AG04450 (cell line): ENCODE measurements at regions of chr9 and their contacts with region 1.

Region 1: GRCh38 chr9:127785023-127785932 is 556 bp upstream of the CDK9 start:
- DNase-seq: no peak
- H3K4me3 ChIP-seq: peak overlapping the region; percentile 68
- H3K27ac ChIP-seq: no peak overlapping the region
- H3K27me3 ChIP-seq: peaks cover 3% of the 10 kb centered on the region
- CTCF ChIP-seq: peak; percentile 72

Region 2: GRCh38 chr9:127694890-127695720 is 90.2 kb before region 1 on chr9:
- CTCF ChIA-PET with region 1: no interaction called
- POLR2A ChIA-PET with region 1: no interaction called
- DNase-seq: no peak
- H3K4me3 ChIP-seq: no peak overlapping the region
- H3K27ac ChIP-seq: no peak overlapping the region
- H3K27me3 ChIP-seq: no peaks in the 10 kb centered on the region
- CTCF ChIP-seq: no peak

Region 3: DNA sequence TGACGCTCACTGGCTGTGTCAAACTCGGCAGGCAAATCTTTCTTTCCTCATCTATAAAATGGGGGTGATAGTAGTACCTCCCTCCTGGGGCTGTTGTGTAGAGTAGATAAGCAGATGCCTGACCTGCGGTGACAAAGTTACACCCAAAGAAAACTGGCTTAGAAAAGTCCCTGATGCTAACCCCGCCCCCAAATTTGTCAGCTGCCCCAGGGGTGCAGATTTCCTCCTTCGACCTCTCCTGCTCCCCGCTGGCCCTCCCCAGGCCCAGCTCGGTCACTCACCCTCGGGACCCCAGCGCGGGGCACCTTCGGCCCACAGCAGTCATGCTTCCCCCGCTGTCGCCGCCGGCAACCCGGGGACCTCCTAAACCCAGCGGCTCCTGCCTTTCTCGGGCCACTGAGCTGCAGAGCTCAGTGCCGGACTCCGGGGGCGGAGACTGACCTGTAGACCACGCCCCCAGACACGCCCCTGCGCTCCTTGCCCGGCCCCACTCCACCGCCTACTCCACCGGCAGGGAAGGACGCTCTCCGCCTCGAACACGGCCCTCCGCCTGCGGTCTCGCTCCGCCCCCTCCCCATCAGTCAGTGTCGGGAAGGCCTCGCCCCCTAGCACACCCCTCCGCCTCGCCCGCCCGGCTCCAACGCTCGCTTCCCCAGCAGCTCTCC is 14.2 kb before region 1 on chr9:
- CTCF ChIA-PET with region 1: interaction called, 13 read pairs
- POLR2A ChIA-PET with region 1: interaction called, 5 read pairs
- DNase-seq: peak; percentile 92
- H3K4me3 ChIP-seq: peak overlapping the region; percentile 53
- H3K27ac ChIP-seq: no peak overlapping the region
- H3K27me3 ChIP-seq: no peaks in the 10 kb centered on the region
- CTCF ChIP-seq: no peak

Region 4: DNA sequence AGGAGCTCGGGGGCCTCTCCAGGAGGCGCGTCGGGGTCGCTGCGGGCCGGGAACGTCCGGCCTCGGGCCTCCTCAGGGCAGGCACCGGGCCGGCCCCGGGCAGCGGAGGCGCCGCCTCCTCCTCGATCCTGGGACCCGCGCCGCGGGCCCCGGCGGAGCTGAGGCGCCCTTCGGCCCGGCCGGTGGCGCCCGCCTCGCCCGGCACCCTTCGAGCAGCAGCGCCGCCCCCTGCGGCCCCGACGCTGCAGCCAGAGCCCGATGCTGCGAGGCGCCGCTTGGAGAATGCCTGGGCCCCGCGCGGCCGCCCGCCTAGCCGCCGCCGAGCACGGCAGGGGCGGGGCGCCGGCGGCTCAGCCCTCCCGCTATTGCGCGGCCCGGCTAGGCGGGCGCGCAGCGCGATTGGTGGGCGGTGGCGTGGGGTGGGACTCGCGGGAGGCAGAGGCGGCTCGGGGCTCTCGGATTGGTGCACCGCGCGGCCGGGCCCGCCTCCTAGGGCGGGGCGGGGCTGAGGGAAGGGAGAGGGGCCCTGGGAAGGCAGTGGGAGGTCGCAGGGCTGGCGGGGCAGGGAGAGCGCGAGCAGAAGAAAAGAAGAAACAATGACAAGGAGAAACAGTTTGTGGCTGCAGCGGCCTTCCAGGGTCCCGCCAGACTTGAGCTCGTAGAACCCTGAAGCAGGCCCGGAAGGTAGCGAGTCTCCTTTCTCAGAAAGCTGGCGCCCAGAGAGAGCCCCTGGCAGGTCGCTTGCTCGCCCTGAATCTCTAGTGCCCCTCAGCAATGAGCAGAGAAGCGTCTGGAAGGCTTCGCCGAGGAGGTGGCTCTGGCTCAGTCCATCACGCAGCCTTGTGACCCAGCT is 195.7 kb after region 1 on chr9 and contains the start of gene EEIG1:
- CTCF ChIA-PET with region 1: no interaction called
- POLR2A ChIA-PET with region 1: no interaction called
- DNase-seq: peak; percentile 52
- H3K4me3 ChIP-seq: peak within 1 kb of the TSS; percentile 83
- H3K27ac ChIP-seq: peak within 1 kb of the TSS; percentile 84
- H3K27me3 ChIP-seq: no peaks in the 10 kb centered on the region
- CTCF ChIP-seq: no peak
- polyA plus RNA-seq, gene EEIG1: 8.3 and 8.6 TPM in 2 replicates

Region 5: GRCh38 chr9:128150594-128151308 is 365.5 kb after region 1 on chr9:
- CTCF ChIA-PET with region 1: no interaction called
- POLR2A ChIA-PET with region 1: no interaction called
- DNase-seq: no peak
- H3K4me3 ChIP-seq: no peak overlapping the region
- H3K27ac ChIP-seq: no peak overlapping the region
- H3K27me3 ChIP-seq: peaks cover 7% of the 10 kb centered on the region
- CTCF ChIP-seq: peak; percentile 25; the same call in 1 of the 2 replicates

Region 6: GRCh38 chr9:128575469-128575868 is 790.2 kb after region 1 on chr9:
- CTCF ChIA-PET with region 1: no interaction called
- POLR2A ChIA-PET with region 1: no interaction called
- DNase-seq: no peak
- H3K4me3 ChIP-seq: no peak overlapping the region
- H3K27ac ChIP-seq: no peak overlapping the region
- H3K27me3 ChIP-seq: no peaks in the 10 kb centered on the region
- CTCF ChIP-seq: no peak